ENCODE measurements at regions of chr16 and their contacts with region 1.

Region 1: DNA sequence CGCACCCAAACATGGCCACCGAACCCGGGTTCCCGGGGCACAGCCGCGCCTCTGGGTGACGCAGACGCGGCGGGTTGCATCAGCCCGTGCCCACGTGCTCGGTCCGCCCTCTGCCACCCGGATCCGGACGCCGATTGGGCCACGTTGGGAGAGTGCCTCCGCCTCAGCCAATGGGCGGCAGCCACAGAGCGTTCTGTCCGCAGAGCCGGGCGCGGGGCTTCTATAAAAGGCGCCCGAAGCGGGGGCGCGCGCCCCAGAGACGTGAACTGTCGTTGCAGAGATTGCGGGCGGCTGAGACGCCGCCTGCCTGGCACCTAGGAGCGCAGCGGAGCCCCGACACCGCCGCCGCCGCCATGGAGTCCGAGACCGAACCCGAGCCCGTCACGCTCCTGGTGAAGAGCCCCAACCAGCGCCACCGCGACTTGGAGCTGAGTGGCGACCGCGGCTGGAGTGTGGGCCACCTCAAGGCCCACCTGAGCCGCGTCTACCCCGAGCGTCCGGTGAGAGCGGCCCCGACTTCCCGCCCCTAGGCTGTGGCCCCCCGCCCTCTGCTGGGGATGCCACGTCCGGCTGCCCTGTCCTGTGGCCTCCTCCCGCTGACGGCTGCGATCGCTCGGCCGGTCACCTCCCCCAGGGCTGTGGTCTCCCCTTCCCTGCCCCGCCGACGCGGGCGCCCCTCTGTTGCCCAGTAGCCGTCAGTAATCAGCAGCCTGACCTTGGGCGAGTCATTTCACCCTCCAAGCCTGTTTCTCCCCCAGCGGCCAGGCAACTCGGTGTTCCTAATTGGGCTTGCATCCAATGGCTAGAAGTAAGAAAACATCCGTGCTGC is at the start of gene HERPUD1:
- DNase-seq: peak; percentile 100
- ATAC-seq: peak; percentile 94
- H3K4me3 Mint-ChIP-seq: peak within 1 kb of the TSS; percentile 98
- H3K27ac Mint-ChIP-seq: peak within 1 kb of the TSS; percentile 95
- H3K4me1 Mint-ChIP-seq: peaks cover 40% of the 10 kb centered on the region
- H3K27me3 Mint-ChIP-seq: no peaks in the 10 kb centered on the region
- total RNA-seq, gene HERPUD1: 136 to 195 TPM

Region 2: GRCh38 chr16:56450986-56451752 is 480.9 kb before region 1 on chr16 and contains the starts of genes NUDT21 and OGFOD1:
- CTCF ChIA-PET with region 1: no interaction called
- POLR2A ChIA-PET with region 1: no interaction called
- intact Hi-C with region 1: loop called in 1 of 2 experiments (anchors 2 kb)
- DNase-seq: peak; percentile 95
- ATAC-seq: peak; percentile 97
- H3K4me3 Mint-ChIP-seq: peak within 1 kb of the TSS; percentile 84
- H3K27ac Mint-ChIP-seq: peak within 1 kb of the TSS; percentile 93
- H3K4me1 Mint-ChIP-seq: peaks cover 51% of the 10 kb centered on the region
- H3K27me3 Mint-ChIP-seq: no peaks in the 10 kb centered on the region
- total RNA-seq, gene NUDT21: 333 to 349 TPM
- total RNA-seq, gene OGFOD1: 56.2 to 64.1 TPM

Region 3: DNA sequence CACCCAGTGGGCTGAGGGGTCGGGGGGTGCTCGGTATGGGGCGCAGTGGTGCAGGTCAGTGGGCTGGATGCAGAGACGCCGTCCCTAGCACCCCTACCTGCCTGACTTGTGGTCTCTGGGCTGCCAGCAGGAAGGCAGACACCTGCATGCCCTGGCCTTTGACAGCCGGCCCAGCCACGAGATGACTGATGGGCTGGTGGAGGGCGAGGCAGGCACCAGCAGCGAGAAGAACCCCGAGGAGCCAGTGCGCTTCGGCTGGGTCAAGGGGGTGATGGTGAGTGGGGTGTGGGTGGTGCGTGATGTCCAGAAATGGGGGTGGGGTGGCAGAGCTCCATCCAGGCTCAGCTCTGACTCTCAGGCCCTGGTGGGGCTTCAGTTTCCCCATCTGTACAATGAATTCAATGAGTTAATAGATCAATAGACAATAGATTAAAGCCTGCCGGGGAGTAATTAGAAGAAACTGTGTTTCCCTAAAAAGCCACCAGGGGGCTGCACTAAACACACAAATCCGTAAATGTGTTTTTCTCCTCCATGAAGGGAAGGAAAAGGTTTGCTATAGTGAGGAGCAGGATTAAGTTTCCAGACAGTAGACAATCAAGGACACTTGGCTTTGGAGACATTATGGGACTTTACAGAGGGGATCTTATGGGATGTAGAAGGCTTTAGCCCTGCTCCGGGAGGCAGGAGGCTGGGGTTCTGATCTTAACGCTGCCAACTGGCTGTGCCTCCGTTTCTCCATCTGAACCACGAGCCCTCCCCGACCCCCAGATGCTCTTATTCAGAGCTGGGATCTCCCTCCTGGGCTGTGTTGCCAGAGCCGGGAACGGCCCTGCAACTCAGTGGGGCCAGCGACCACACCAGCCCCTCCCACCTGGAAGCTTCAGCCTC is 64.9 kb before region 1 on chr16:
- CTCF ChIA-PET with region 1: no interaction called
- POLR2A ChIA-PET with region 1: interaction called, 3 read pairs
- intact Hi-C with region 1: loop called in 1 of 2 experiments (anchors 5 kb)
- DNase-seq: peak; percentile 62
- ATAC-seq: peak; percentile 48
- H3K4me3 Mint-ChIP-seq: no peak overlapping the region
- H3K27ac Mint-ChIP-seq: no peak overlapping the region
- H3K4me1 Mint-ChIP-seq: peaks cover 3% of the 10 kb centered on the region
- H3K27me3 Mint-ChIP-seq: no peaks in the 10 kb centered on the region

Region 4: DNA sequence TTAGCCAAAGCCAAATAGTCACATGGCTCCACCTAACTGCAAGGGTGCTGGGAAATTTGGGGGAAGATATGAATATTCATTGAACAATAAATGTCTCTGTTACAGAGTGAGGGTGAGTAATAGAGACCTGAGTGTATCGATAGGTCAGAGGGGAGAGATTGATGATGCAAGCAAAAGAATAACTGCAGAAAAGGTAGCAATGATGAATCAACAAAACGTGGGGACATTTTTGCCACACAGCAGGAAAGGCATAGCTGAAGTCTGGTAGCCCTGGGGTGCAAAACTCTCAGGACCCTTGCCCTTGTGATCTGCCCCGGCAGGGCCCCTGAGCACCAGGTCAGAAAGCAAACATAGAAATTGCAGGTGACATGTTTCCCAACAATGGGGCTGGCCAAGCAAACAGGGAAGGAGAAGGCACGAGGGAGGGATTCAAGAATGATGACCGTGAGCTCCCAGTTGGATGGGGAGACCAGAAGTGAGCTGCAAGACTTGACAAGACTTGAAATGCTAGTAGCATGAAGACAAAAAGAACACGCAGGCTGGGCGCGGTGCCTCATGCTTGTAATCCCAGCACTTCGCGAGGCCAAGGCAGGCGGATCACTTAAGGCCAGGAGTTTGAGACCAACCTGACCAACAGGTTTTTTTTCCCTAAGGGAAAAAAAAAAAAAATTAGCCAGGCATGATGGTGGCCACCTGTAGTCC is 12.9 kb before region 1 on chr16:
- CTCF ChIA-PET with region 1: interaction called, 4 read pairs
- POLR2A ChIA-PET with region 1: interaction called, 26 read pairs
- intact Hi-C with region 1: no loop called
- DNase-seq: no peak
- ATAC-seq: no peak
- H3K4me3 Mint-ChIP-seq: no peak overlapping the region
- H3K27ac Mint-ChIP-seq: no peak overlapping the region
- H3K4me1 Mint-ChIP-seq: peaks cover 28% of the 10 kb centered on the region
- H3K27me3 Mint-ChIP-seq: no peaks in the 10 kb centered on the region

Region 5: GRCh38 chr16:56970934-56971767 is 39.0 kb after region 1 on chr16:
- CTCF ChIA-PET with region 1: no interaction called
- POLR2A ChIA-PET with region 1: no interaction called
- intact Hi-C with region 1: no loop called
- DNase-seq: no peak
- ATAC-seq: no peak
- H3K4me3 Mint-ChIP-seq: no peak overlapping the region
- H3K27ac Mint-ChIP-seq: no peak overlapping the region
- H3K4me1 Mint-ChIP-seq: peaks cover 21% of the 10 kb centered on the region
- H3K27me3 Mint-ChIP-seq: no peaks in the 10 kb centered on the region

Region 6: DNA sequence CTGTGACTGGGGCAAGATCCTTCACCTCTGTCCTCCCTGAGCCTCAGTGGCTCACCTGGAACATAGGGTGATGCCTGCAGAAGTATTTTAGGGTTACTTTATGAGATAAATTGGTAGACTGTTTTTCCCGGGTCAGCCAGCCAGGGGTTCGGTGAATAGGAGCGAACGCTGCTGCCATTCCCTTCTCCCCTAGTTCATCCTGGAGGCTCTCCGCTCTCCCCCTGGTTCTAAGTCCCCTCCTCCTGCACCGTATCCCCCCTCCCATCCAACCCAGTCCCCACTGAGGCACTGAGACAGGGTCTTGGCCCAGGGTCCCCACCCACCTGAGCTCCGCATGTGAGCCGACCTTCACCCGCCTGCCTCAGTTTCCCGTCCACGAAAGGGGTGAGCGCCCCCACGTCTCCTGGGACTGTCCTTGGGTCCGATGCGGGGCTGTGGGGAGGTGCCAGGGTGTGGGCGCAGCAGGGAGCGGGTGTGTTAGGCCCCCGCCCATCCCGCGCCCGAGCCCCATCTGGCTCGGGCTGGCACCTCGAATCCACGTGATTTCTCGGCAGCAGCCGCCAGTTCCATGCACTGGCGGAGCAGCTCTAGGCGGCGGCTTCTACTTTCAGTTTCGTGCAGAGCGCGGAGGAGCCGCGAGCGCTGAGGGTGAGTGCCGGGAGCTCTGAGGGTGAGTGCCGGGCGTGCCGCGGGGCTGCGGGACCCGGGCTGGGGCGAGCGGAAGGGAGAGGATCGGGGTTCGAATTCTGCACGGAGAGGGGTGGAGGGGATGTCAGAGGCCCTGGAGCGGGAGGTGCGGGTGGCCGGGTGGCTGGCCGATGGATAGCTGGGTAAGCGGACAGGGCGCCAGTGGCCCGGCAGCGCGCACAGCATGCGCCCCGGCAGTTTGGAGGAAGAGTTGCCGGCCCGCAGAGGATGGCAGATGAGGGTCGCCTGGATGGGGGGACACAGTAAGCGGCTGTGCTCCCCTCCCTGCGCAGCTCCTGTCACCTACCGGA is 57.1 kb after region 1 on chr16 and contains the start of gene NLRC5:
- CTCF ChIA-PET with region 1: no interaction called
- POLR2A ChIA-PET with region 1: interaction called, 5 read pairs
- intact Hi-C with region 1: loop called (anchors 1 to 2 kb)
- DNase-seq: peak; percentile 97
- ATAC-seq: peak; percentile 78
- H3K4me3 Mint-ChIP-seq: peak within 1 kb of the TSS; percentile 98
- H3K27ac Mint-ChIP-seq: peak within 1 kb of the TSS; percentile 99
- H3K4me1 Mint-ChIP-seq: peaks cover 69% of the 10 kb centered on the region
- H3K27me3 Mint-ChIP-seq: no peaks in the 10 kb centered on the region
- total RNA-seq, gene NLRC5: 143 to 175 TPM

Region 7: GRCh38 chr16:57045694-57046381 is 113.7 kb after region 1 on chr16:
- CTCF ChIA-PET with region 1: no interaction called
- POLR2A ChIA-PET with region 1: interaction called, 6 read pairs
- intact Hi-C with region 1: loop called in 1 of 2 experiments (anchors 5 kb)
- DNase-seq: peak; percentile 62
- ATAC-seq: no peak
- H3K4me3 Mint-ChIP-seq: no peak overlapping the region
- H3K27ac Mint-ChIP-seq: peak overlapping the region; percentile 73
- H3K4me1 Mint-ChIP-seq: peaks cover 48% of the 10 kb centered on the region
- H3K27me3 Mint-ChIP-seq: no peaks in the 10 kb centered on the region

Region 8: DNA sequence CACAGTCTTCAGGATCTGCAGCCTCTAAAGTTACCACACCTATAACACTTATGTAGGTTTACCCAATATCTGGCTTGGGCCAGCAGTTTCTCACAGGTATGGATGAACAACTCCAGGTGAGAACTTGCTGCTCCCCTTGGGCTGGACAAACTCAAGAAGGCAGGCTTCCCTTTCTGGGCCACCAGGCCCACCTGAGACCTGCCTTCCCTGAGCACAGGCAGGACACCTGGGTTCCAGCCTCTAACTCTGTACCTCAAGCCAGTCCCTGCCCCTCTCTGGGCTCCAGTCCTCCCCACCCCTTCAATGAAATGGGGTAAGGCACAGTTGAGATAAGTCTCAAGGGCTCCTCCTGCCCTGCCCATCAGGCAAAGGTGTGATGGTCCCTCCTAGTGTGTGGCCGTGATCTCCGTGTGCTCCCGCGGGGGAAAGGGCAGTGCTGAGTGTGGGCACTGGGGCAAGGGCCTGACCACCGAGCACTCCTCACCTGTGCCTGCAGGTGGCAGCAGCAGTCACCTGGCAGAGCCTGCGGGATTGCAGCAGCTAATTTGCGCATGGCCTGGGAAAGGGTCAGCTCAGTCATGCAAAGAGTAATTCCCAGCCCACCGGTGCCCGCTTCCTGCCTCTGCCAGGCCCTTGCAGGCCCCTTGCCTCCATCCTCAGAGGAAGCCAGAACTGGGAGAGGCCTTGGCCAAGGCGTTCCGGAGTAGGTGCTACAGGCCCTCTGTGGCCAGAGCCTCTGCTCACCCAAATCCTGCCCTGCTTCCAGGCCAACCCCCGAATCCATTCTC is 668.1 kb after region 1 on chr16:
- CTCF ChIA-PET with region 1: no interaction called
- POLR2A ChIA-PET with region 1: no interaction called
- intact Hi-C with region 1: loop called in 1 of 2 experiments (anchors 10 kb)
- DNase-seq: peak; percentile 73
- ATAC-seq: peak; percentile 18
- H3K4me3 Mint-ChIP-seq: no peak overlapping the region
- H3K27ac Mint-ChIP-seq: no peak overlapping the region
- H3K4me1 Mint-ChIP-seq: peaks cover 35% of the 10 kb centered on the region
- H3K27me3 Mint-ChIP-seq: no peaks in the 10 kb centered on the region